ENCODE measurements at regions of chr12 and their contacts with region 1.

Region 1: DNA sequence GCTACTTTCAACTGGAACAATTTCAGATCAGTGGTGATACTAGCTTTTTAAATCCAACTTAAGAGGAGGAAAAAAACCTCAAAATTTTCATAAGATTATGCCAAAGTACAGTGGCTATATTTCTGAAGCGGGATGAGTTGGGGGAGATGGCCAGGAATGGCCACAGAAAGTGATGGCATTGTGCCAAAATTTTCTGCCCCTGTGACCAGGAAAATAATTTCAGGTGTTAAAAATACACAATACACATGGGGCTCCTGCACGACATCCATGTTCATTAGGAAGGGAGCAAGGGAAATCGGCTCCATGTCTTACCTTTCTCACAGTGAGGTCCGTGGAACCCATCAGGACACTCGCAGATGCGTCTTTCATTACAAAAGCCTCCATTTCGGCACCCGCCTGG is 53.7 kb downstream of the WIF1 start:
- DNase-seq: no peak
- ATAC-seq: no peak

Region 2: GRCh38 chr12:64801381-64801780 is 266.0 kb before region 1 on chr12:
- intact Hi-C with region 1: no loop called
- DNase-seq: no peak
- ATAC-seq: no peak

Region 3: GRCh38 chr12:65055859-65056258 is 11.5 kb before region 1 on chr12:
- intact Hi-C with region 1: loop called in 1 of 2 experiments (anchors 1 kb)
- DNase-seq: no peak
- ATAC-seq: no peak

Region 4: GRCh38 chr12:65121049-65121955 is 53.9 kb after region 1 on chr12 and contains the start of gene WIF1:
- intact Hi-C with region 1: no loop called
- DNase-seq: peak; percentile 41
- ATAC-seq: peak; percentile 30 to 57
- total RNA-seq, gene WIF1: 0.91 TPM in 1 of 2 donors, not detected in the other

Region 5: GRCh38 chr12:65282840-65283239 is 215.5 kb after region 1 on chr12:
- intact Hi-C with region 1: no loop called
- DNase-seq: no peak
- ATAC-seq: no peak

Region 6: DNA sequence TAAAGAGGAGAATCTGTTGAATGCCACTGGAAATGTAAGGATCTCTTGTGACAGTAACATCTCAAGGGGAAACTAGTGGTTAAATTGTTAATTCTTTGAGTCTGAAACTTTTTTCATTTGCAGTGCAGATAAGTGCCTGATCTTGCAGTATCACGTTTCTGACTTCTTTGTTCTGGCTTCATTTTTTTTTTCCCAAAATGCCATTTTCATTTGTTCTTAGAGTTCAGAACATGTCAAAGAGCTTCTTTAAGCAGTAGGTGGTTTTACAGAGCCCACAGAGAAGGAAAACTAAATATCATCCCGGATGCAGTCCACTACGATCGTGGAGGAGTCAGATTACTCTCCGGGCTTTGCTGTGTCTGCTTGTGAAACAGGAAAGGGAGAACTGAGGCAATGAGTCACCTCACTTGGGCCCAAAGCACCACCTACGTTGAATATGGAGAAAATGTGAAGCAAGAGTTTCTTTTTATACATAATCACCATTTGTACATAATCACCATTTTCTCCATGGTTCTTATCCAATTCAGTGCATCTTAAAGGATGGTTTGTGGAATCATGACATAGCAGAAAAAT is 800.8 kb after region 1 on chr12:
- intact Hi-C with region 1: no loop called
- DNase-seq: no peak
- ATAC-seq: peak in 1 of 2 donors; percentile 39